IMR-90 (cell line): ENCODE measurements at regions of chr3 and their contacts with region 1.

Region 1: GRCh38 chr3:153714588-153715290 is 406.5 kb upstream of the ARHGEF26 start:
- DNase-seq: no peak
- ATAC-seq: no peak
- H3K4me3 ChIP-seq: no peak overlapping the region
- H3K27ac ChIP-seq: no peak overlapping the region
- H3K4me1 ChIP-seq: no peaks in the 10 kb centered on the region
- H3K27me3 ChIP-seq: no peaks in the 10 kb centered on the region
- CTCF ChIP-seq: no peak
- POLR2A ChIP-seq: no peak
- RAD21 ChIP-seq: no peak

Region 2: DNA sequence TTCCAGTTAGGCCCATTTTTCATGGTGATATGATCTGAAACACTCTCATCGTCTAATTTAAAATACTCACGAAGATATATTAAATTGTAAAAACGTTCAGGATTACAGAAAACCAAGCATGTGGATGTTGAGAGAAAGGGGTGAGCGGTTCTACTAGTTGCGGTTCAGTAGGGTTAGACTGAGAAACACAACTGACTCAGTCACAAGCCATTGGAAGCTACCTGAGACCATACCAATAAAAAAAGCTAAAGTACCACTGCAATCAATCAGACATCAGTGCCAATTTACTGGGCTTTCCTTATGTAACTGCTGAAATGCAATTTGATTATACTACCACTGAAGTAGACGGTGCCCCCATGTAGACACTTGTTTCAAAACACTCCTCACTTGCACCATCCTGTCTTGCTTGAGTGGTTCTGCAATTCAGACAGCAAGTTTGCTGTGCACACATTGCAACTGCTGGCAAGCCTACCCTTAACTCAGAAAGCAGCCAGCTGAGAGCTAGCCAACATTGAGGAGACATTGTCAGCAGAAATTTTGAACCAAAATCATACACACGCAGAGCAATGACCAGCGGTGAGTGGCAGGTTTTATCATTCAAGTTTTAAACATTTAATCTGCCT is 37.8 kb after region 1 on chr3:
- CTCF ChIA-PET with region 1: no interaction called
- POLR2A ChIA-PET with region 1: interaction called, 11 read pairs
- dilution Hi-C with region 1: no loop called
- in situ Hi-C with region 1: no loop called
- intact Hi-C with region 1: no loop called
- DNase-seq: no peak
- ATAC-seq: no peak
- H3K4me3 ChIP-seq: no peak overlapping the region
- H3K27ac ChIP-seq: no peak overlapping the region
- H3K4me1 ChIP-seq: no peaks in the 10 kb centered on the region
- H3K27me3 ChIP-seq: no peaks in the 10 kb centered on the region
- CTCF ChIP-seq: no peak
- POLR2A ChIP-seq: no peak
- RAD21 ChIP-seq: no peak